ENCODE measurements at regions of chr16 and their contacts with region 1.

Region 1: DNA sequence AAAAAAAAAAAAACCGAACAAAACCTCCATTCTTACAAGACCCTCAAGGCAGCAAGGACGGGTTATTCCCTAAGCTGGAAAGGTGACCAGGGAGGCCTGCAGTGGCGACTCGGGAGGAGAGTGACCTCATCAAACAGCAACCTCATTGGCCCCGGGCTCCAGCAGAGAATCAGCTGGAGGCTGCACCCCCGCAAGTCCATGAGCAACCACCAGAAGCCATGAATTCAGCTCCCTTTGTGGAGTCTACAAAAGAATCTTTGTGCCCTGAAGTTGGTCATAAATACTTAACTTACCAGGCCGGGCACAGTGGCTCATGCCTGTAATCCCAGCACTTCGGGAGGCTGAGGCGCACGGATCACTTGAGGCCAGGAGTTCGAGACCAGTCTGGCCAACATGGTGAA is 80.9 kb upstream of the CREBBP start:
- DNase-seq: no peak
- H3K4me3 ChIP-seq: no peak overlapping the region
- H3K27ac ChIP-seq: no peak overlapping the region
- H3K4me1 ChIP-seq: peaks cover 0 to 14% (median 10%) of the 10 kb centered on the region in 4 experiments
- H3K27me3 ChIP-seq: peaks cover 4 to 43% (median 9%) of the 10 kb centered on the region in 5 experiments

Region 2: DNA sequence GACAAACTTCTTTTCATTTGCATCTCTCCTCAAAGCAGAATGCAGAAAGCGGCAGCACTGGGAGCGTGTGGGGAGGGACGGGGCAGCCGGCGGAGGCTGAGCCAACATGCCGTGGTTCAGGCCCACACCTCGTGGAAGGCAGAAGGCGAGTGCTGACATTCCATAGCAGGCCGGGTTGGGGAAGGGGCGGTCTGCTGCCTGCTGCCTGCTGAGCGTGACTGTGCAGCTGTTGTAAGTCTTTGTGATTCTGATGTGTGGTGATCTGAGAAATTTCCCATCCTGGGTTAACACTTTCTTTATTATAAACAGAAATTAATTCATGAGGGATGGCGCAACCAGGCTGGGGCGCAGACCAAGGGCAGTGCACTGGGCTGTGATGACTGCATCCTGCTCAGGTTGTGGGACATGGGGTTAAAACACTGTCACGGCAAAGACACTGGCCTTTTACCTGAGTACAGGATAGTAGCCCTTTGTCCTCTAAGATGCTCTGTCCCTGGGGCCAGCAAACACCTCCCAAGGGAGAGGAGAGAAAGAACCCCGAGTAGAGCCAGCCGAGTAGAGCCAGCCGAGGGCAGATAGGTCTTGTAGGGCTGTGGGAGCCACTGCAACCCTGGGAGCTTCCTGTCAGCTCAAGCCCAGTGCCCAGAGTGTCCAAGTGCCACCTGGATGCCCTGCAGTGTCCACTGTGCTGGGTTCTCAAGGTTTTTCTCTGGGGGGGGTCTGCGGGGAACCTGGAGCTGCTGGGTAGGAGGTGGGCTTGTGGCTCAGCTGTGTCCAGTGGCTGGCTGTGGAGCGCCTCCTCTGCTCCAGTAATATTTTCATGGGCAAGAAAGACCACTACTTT is 315.7 kb before region 1 on chr16:
- CTCF ChIA-PET with region 1: no interaction called
- POLR2A ChIA-PET with region 1: no interaction called
- DNase-seq: no peak
- H3K4me3 ChIP-seq: no peak overlapping the region
- H3K27ac ChIP-seq: no peak overlapping the region
- H3K4me1 ChIP-seq: no peaks in the 10 kb centered on the region
- H3K27me3 ChIP-seq: no peaks in the 10 kb centered on the region

Region 3: DNA sequence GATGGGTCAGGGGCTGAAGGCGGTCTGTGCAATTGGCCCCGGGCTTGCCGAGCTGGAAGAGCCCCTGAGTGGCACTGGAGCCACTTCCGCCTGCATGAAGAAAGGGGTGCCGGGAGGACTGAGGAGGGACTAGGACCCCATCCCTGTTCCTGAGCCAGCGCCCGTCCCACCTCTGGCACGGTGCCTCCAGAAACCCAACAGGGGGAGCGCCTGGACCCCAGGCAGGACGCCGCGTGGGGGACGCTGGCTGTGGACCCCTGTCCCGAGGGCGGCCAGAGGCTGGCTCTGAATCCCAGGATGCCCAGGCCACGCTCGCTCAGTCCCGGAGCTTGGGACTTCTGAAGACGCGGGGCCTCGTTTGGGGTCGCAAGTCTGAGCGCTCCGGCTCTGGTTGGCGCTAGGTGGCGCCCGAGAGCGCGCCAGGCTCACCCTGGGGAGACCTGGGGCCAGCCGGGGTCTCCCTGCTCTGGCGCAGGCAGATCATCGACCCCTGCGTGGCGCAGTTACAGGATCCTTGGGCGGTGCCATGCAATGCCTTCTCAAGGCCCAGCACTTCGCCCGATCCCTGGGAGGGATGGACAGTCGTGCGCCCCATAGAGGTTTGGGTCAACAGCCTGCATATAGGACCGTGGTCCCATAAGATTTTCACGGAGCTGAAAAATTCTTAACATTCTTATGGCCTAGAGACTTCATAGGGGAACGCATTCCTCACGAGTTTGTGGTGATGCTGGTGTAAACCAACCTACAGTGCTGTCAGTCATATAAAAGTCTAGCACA is 22.4 kb before region 1 on chr16:
- CTCF ChIA-PET with region 1: interaction called, 10 read pairs
- POLR2A ChIA-PET with region 1: no interaction called
- DNase-seq: peak; percentile 64 to 74 (median 68)
- H3K4me3 ChIP-seq: peak overlapping the region in 5 of 7 experiments; percentile 38 to 65 (median 56)
- H3K27ac ChIP-seq: no peak overlapping the region
- H3K4me1 ChIP-seq: peaks cover 0 to 9% (median 7%) of the 10 kb centered on the region in 4 experiments
- H3K27me3 ChIP-seq: peaks cover 0 to 9% (median 4%) of the 10 kb centered on the region in 5 experiments

Region 4: GRCh38 chr16:3950343-3951193 is 10.9 kb before region 1 on chr16:
- CTCF ChIA-PET with region 1: no interaction called
- POLR2A ChIA-PET with region 1: no interaction called
- DNase-seq: no peak
- H3K4me3 ChIP-seq: no peak overlapping the region
- H3K27ac ChIP-seq: no peak overlapping the region
- H3K4me1 ChIP-seq: peaks cover 0 to 4% (median 0%) of the 10 kb centered on the region in 4 experiments
- H3K27me3 ChIP-seq: peaks cover 0 to 50% (median 11%) of the 10 kb centered on the region in 5 experiments